Brain microvascular endothelial cell (primary cell): ENCODE measurements at regions of chr7 and their contacts with region 1.

Region 1: DNA sequence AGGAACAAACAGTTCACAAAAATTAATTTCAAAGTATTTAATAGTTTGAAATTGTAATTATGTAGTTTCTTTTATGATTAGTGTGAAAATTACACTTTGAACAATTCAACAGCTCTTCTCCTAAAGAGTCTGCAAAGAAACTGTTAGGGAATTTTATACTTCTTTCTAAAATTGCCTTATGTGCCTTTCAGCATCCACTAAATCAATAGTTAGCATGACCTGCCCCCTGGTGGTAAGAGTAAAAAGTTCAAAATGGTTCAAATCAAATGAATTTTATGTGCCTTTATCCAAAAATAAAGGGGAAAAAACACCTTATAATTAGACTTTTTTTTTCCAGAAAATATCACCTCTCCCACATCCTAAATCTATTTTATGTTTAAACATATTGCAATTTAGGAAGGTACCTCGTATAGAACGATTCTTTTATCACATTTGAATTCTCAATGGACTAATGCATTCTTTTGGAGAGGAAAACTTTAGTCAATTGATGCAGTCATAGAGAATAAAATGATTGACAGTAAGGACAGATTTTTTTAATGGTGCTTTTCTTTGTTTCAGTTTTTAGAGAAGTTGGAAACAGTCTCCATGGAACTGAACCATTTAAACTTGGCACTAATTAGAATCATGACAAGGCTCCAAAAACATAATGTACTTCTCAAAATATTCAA is 163.7 kb downstream of the SEMA3D start:
- DNase-seq: peak; percentile 39
- H3K4me3 ChIP-seq: no peak overlapping the region
- H3K27ac ChIP-seq: no peak overlapping the region
- H3K27me3 ChIP-seq: no peaks in the 10 kb centered on the region
- CTCF ChIP-seq: peak; percentile 30

Region 2: DNA sequence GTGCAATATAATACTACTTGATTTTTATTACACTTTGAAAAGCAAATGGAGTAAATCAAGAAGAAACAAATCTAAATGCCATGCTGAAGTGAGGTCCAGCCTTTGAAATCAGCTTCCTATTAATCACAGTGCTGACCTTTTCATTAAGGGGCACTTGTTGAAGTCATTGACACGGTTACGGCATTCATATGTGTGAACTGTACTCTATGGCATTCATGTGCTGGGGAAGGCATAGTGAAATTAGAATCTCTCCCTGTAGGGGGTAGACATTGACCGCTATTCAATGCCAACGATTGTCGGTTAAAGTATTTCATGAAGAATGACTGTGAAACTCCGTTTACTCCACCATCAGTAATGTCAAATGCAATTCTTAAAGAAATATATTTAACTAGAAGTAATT is 532.5 kb before region 1 on chr7:
- in situ Hi-C with region 1: loop called (anchors 25 kb)
- DNase-seq: peak; percentile 64
- H3K4me3 ChIP-seq: no peak overlapping the region
- H3K27ac ChIP-seq: no peak overlapping the region
- H3K27me3 ChIP-seq: no peaks in the 10 kb centered on the region
- CTCF ChIP-seq: peak; percentile 40

Region 3: DNA sequence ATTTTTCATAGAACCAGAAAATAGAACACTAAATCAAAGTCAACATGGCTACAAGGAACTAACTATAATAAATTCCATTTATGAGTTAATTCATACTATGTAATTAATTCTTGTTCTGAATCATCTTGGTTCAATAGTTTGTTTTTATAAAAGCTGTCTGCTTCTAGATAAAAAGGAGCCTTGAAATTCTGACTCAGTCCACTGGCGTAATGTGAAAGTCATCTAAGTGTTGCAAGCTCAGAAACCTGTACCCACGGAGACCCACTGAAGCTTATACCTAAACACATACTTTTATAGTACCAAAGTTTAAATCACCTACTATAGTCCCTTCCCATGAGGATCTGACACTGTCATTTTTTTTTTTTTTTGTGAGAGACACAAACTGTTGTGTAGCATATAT is 325.7 kb before region 1 on chr7:
- in situ Hi-C with region 1: no loop called
- DNase-seq: peak; percentile 95
- H3K4me3 ChIP-seq: no peak overlapping the region
- H3K27ac ChIP-seq: peak overlapping the region; percentile 85
- H3K27me3 ChIP-seq: no peaks in the 10 kb centered on the region
- CTCF ChIP-seq: no peak

Region 4: DNA sequence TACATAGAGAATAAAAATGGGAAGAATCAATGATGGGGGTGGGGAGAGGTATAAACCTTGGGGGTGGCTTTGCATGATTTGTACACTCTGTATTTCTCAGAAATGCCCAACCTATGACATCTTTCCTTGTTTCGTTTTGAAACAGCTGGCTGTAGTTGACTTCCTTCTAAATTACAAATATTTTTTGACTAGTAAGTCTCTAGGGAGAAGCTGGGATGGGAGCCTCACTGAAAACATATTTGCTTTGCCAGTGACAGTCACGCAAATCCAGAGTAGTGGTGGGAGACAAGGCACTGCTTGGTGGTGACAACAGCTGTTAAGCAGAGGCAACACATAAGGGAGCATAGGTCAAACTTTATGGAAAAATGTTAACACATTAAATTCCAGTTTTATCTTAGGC is 276.8 kb before region 1 on chr7:
- in situ Hi-C with region 1: no loop called
- DNase-seq: peak; percentile 52
- H3K4me3 ChIP-seq: no peak overlapping the region
- H3K27ac ChIP-seq: no peak overlapping the region
- H3K27me3 ChIP-seq: no peaks in the 10 kb centered on the region
- CTCF ChIP-seq: no peak

Region 5: DNA sequence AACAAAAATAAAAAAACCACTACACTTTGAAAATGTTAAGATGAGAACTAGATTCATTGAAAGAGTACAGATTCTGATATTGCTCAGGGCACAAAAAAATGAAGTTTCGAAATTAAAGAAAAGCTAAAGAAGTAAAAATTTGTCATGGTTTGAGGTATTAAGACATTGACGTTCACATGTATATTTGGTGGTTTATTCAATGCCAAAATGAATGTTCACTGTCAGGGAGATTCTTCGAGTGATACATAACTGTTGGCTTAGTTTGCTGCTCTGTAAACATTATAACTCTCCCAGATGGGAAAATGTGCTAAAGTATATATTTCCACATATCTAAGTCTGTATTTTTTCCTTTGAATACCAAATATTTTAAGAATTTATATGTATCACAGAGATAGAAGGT is 181.4 kb before region 1 on chr7:
- in situ Hi-C with region 1: no loop called
- DNase-seq: no peak
- H3K4me3 ChIP-seq: no peak overlapping the region
- H3K27ac ChIP-seq: no peak overlapping the region
- H3K27me3 ChIP-seq: no peaks in the 10 kb centered on the region
- CTCF ChIP-seq: no peak

Region 6: GRCh38 chr7:85287106-85287825 is 264.1 kb after region 1 on chr7:
- in situ Hi-C with region 1: no loop called
- DNase-seq: peak; percentile 68
- H3K4me3 ChIP-seq: no peak overlapping the region
- H3K27ac ChIP-seq: no peak overlapping the region
- H3K27me3 ChIP-seq: no peaks in the 10 kb centered on the region
- CTCF ChIP-seq: no peak